WTC11 (cell line): ENCODE measurements at regions of chr11 and their contacts with region 1.

Region 1: GRCh38 chr11:64803163-64803845 is at the start of gene MAP4K2:
- DNase-seq: peak; percentile 90
- ATAC-seq: peak; percentile 86
- H3K4me3 Mint-ChIP-seq: peak within 1 kb of the TSS; percentile 92
- H3K27ac Mint-ChIP-seq: peak within 1 kb of the TSS; percentile 99
- H3K4me1 Mint-ChIP-seq: peaks cover 11% of the 10 kb centered on the region
- H3K27me3 Mint-ChIP-seq: no peaks in the 10 kb centered on the region
- CTCF ChIP-seq: no peak
- total RNA-seq, gene MAP4K2: 24.5 to 31.6 TPM (median 28.3 TPM) in 3 replicates

Region 2: DNA sequence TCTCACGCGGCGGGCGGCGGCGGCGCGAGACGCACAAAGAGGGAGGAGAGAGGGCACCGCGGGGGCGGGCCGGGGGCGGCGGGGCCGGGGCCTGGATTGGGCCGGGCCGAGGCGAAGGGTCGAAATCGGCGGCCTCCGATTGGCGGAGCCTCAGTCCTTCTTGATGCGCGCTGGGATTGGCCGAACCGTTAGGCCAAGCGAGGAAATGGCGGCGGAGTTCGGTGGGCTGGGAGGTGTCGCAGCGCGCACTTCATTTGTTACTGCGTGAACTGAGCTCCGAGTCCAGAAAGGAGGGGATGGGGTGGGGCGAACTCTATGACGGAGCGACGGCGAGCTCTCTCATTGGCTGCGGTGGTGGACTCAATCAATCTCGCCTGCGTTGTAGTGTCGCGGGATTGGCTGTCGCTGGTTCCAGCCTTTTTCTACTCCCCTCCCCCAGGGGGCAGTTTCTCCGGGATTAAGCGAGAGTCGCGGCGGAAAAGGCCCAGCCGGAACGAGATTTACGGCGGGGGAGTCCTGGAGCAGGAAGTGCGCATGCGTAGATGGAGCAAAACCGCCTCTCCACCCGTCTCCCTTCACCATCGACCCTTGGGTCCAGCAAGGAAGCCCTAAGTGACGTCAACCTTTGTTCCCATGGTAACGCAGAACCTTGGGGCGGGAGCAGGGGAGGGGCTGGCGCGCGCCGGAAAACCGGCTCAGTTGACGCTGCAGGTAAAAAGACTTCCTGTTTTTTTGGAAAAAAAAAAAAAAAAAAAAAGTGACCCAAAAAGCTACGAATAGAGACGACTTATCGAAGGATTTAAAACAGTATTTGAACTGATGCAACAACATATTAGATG is 24.6 kb before region 1 on chr11 and contains the start of gene SF1:
- CTCF ChIA-PET with region 1: interaction called, 23 read pairs
- POLR2A ChIA-PET with region 1: interaction called, 17 read pairs
- DNase-seq: peak; percentile 98
- ATAC-seq: peak; percentile 95
- H3K4me3 Mint-ChIP-seq: peak within 1 kb of the TSS; percentile 79
- H3K27ac Mint-ChIP-seq: peak within 1 kb of the TSS; percentile 98
- H3K4me1 Mint-ChIP-seq: peaks cover 32% of the 10 kb centered on the region
- H3K27me3 Mint-ChIP-seq: no peaks in the 10 kb centered on the region
- CTCF ChIP-seq: no peak
- total RNA-seq, gene SF1: 285 to 314 TPM (median 300 TPM) in 3 replicates

Region 3: DNA sequence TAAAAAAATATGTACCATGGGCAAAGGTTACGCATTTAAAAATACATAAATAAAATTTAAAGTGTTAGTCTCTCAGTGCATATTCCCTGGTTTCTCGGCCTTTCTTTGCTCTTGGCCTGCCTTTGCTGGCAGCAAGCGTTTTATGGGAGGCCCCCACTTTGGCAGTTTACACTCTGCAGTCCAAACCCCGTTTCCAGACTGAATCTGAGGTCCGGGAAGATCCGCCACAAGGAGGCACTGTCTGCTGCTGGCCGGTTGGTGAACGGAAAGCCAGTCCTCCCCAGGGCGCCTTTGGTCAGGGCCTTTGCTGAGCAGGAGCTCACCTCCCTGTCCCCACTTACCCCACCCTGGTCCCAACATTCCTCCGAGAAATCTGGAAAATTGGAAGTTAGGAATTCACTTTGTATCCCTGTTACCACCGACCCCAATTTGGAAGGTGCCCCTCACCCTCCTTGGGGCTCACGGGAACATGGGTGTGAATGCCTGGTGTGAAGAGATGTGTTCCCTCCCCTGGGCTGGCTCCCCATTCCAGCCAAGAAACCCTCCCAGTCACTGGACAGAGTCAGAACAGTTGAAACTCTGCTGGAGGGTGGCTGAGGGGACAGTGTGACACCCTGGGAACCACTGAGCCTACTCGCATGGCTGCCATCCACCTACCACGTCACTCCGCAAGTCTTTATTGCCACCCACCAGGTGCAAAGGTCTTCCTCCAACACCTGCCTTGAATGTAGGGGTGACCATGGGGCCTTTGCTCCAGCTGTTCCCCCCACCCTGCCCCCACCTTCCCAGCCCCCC is 15.6 kb before region 1 on chr11:
- CTCF ChIA-PET with region 1: interaction called, 18 read pairs
- POLR2A ChIA-PET with region 1: no interaction called
- DNase-seq: peak; percentile 85
- ATAC-seq: peak; percentile 91
- H3K4me3 Mint-ChIP-seq: no peak overlapping the region
- H3K27ac Mint-ChIP-seq: no peak overlapping the region
- H3K4me1 Mint-ChIP-seq: no peaks in the 10 kb centered on the region
- H3K27me3 Mint-ChIP-seq: no peaks in the 10 kb centered on the region
- CTCF ChIP-seq: peak; percentile 40

Region 4: DNA sequence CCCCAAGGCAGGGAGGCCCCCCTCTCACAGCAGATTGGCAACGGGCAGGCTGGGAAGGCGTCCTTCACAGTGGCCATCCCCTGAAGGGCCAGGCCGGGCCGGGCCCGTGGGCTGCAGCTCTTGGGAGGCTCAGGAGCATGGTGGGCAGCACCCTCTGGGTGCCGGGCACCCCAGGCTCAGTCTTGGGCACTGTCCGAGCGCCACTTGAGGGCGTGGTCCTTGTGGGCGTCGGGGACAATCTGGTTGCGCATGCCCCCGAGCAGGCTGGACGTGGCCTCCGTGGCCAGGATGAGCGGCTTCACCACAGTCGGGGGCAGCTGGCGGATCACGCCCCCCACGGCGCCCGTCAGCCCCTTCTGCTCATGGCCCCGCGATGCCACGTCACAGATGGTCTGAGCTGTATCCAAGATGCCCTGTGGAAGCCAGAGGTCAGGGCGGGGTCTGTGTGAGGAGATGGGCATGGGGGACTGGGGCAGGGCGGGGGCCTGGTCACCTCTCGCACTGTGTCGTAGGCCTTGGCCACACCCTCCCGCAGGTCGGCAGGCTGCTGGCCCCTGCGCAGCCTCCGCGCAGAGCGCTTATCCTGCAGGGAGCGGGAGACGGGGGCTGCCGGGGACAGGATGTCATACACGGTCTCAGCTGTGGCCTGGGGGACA is 91.6 kb after region 1 on chr11:
- CTCF ChIA-PET with region 1: no interaction called
- POLR2A ChIA-PET with region 1: no interaction called
- DNase-seq: no peak
- ATAC-seq: no peak
- H3K4me3 Mint-ChIP-seq: no peak overlapping the region
- H3K27ac Mint-ChIP-seq: no peak overlapping the region
- H3K4me1 Mint-ChIP-seq: 0 out of 2 replicates have a peak, but pooled peaks cover 2% of the 10 kb centered on the region
- H3K27me3 Mint-ChIP-seq: no peaks in the 10 kb centered on the region
- CTCF ChIP-seq: no peak

Region 5: DNA sequence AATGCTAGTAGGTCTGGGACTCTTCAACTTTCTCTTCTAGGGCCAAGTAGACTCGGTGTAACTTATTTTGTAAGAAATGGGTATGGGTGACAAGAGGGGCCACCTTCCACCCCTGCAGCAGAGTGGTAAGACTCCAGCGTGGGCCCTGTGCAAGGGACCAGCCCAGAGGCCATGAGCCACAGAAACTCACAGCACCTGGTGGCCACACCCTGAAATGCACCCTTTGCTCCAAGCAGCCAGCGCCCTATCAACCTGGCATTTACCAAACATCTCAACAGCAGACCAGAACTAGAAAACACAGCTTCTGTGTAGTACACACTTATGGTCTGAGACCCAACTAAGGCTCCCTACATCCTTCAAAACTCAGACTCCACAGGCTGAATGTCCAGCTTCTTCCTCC is 274.8 kb after region 1 on chr11:
- CTCF ChIA-PET with region 1: no interaction called
- POLR2A ChIA-PET with region 1: no interaction called
- DNase-seq: peak; percentile 73
- ATAC-seq: peak; percentile 89
- H3K4me3 Mint-ChIP-seq: no peak overlapping the region
- H3K27ac Mint-ChIP-seq: peak overlapping the region; percentile 54; the same call in 1 of the 2 replicates
- H3K4me1 Mint-ChIP-seq: peaks cover 14% of the 10 kb centered on the region
- H3K27me3 Mint-ChIP-seq: no peaks in the 10 kb centered on the region
- CTCF ChIP-seq: peak; percentile 88